T-cell (primary cell): ENCODE measurements at regions of chr2 and their contacts with region 1.

Region 1: GRCh38 chr2:84925724-84926376 is 20.4 kb downstream of the TMSB10 start:
- DNase-seq: peak; percentile 91 to 100 (median 96)
- ATAC-seq: peak; percentile 78 to 81 (median 79)
- H3K4me3 ChIP-seq: peak overlapping the region; percentile 61 to 77
- H3K4me3 Mint-ChIP-seq: peak overlapping the region; percentile 91 to 97 (median 92)
- H3K27ac ChIP-seq: peak overlapping the region; percentile 54
- H3K27ac Mint-ChIP-seq: peak overlapping the region; percentile 95 to 97
- H3K4me1 ChIP-seq: peaks cover 15 to 55% of the 10 kb centered on the region in 2 experiments
- H3K4me1 Mint-ChIP-seq: peaks cover 34 to 52% (median 40%) of the 10 kb centered on the region in 3 donors
- H3K27me3 ChIP-seq: no peaks in the 10 kb centered on the region
- H3K27me3 Mint-ChIP-seq: no peaks in the 10 kb centered on the region

Region 2: GRCh38 chr2:84492571-84492970 is 433.3 kb before region 1 on chr2:
- CTCF ChIA-PET with region 1: interaction called, 11 to 14 read pairs
- POLR2A ChIA-PET with region 1: no interaction called
- DNase-seq: no peak
- ATAC-seq: no peak
- H3K4me3 ChIP-seq: no peak overlapping the region
- H3K4me3 Mint-ChIP-seq: no peak overlapping the region
- H3K27ac ChIP-seq: no peak overlapping the region
- H3K27ac Mint-ChIP-seq: no peak overlapping the region
- H3K4me1 ChIP-seq: peaks cover 2 to 4% of the 10 kb centered on the region in 2 experiments
- H3K4me1 Mint-ChIP-seq: peaks cover 7 to 10% (median 7%) of the 10 kb centered on the region in 3 donors
- H3K27me3 ChIP-seq: no peaks in the 10 kb centered on the region
- H3K27me3 Mint-ChIP-seq: no peaks in the 10 kb centered on the region

Region 3: GRCh38 chr2:84881581-84882414 is 44.1 kb before region 1 on chr2:
- CTCF ChIA-PET with region 1: interaction called, 24 to 41 read pairs
- POLR2A ChIA-PET with region 1: interaction called in 1 of 2 experiments, 4 read pairs
- DNase-seq: peak; percentile 69 to 92 (median 84)
- ATAC-seq: peak; percentile 69 to 76 (median 70)
- H3K4me3 ChIP-seq: peak overlapping the region; percentile 71 to 99
- H3K4me3 Mint-ChIP-seq: peak overlapping the region; percentile 94 to 99 (median 97)
- H3K27ac ChIP-seq: peak overlapping the region; percentile 75
- H3K27ac Mint-ChIP-seq: peak overlapping the region; percentile 95 to 96
- H3K4me1 ChIP-seq: peaks cover 14 to 34% of the 10 kb centered on the region in 2 experiments
- H3K4me1 Mint-ChIP-seq: peaks cover 54 to 63% (median 57%) of the 10 kb centered on the region in 3 donors
- H3K27me3 ChIP-seq: peaks cover 0 to 5% of the 10 kb centered on the region in 2 experiments
- H3K27me3 Mint-ChIP-seq: no peaks in the 10 kb centered on the region

Region 4: GRCh38 chr2:84897773-84898172 is 28.1 kb before region 1 on chr2:
- CTCF ChIA-PET with region 1: interaction called, 4 to 12 read pairs
- POLR2A ChIA-PET with region 1: no interaction called
- DNase-seq: no peak
- ATAC-seq: no peak
- H3K4me3 ChIP-seq: no peak overlapping the region
- H3K4me3 Mint-ChIP-seq: no peak overlapping the region
- H3K27ac ChIP-seq: peak overlapping the region; percentile 75
- H3K27ac Mint-ChIP-seq: peak overlapping the region; percentile 97 to 99
- H3K4me1 ChIP-seq: peaks cover 30 to 44% of the 10 kb centered on the region in 2 experiments
- H3K4me1 Mint-ChIP-seq: peaks cover 53 to 77% (median 71%) of the 10 kb centered on the region in 3 donors
- H3K27me3 ChIP-seq: no peaks in the 10 kb centered on the region
- H3K27me3 Mint-ChIP-seq: no peaks in the 10 kb centered on the region

Region 5: GRCh38 chr2:84939426-84940087 is 13.7 kb after region 1 on chr2:
- CTCF ChIA-PET with region 1: interaction called, 7 to 32 read pairs
- POLR2A ChIA-PET with region 1: no interaction called
- DNase-seq: peak in 34 of 35 experiments; percentile 36 to 89 (median 69)
- ATAC-seq: peak; percentile 82 to 89 (median 88)
- H3K4me3 ChIP-seq: peak overlapping the region in 1 of 2 donors; percentile 20
- H3K4me3 Mint-ChIP-seq: peak overlapping the region; percentile 62 to 74 (median 69)
- H3K27ac ChIP-seq: peak overlapping the region; percentile 93
- H3K27ac Mint-ChIP-seq: peak overlapping the region; percentile 94 to 97
- H3K4me1 ChIP-seq: peaks cover 8 to 30% of the 10 kb centered on the region in 2 experiments
- H3K4me1 Mint-ChIP-seq: peaks cover 19 to 41% (median 28%) of the 10 kb centered on the region in 3 donors
- H3K27me3 ChIP-seq: no peaks in the 10 kb centered on the region
- H3K27me3 Mint-ChIP-seq: no peaks in the 10 kb centered on the region

Region 6: GRCh38 chr2:84970868-84971509 is 45.1 kb after region 1 on chr2 and contains the start of gene KCMF1:
- CTCF ChIA-PET with region 1: interaction called, 3 to 15 read pairs
- POLR2A ChIA-PET with region 1: no interaction called
- DNase-seq: peak in 34 of 35 experiments; percentile 20 to 75 (median 52)
- ATAC-seq: peak; percentile 63 to 67 (median 63)
- H3K4me3 ChIP-seq: peak within 1 kb of the TSS; percentile 95 to 99
- H3K4me3 Mint-ChIP-seq: peak within 1 kb of the TSS; percentile 98 to 99 (median 99)
- H3K27ac ChIP-seq: peak within 1 kb of the TSS; percentile 90
- H3K27ac Mint-ChIP-seq: peak within 1 kb of the TSS; percentile 98 to 99
- H3K4me1 ChIP-seq: peaks cover 26 to 34% of the 10 kb centered on the region in 2 experiments
- H3K4me1 Mint-ChIP-seq: peaks cover 59 to 65% (median 64%) of the 10 kb centered on the region in 3 donors
- H3K27me3 ChIP-seq: no peaks in the 10 kb centered on the region
- H3K27me3 Mint-ChIP-seq: no peaks in the 10 kb centered on the region
- total RNA-seq, gene KCMF1: 56.7 to 62.5 (median 60.3) TPM

Region 7: DNA sequence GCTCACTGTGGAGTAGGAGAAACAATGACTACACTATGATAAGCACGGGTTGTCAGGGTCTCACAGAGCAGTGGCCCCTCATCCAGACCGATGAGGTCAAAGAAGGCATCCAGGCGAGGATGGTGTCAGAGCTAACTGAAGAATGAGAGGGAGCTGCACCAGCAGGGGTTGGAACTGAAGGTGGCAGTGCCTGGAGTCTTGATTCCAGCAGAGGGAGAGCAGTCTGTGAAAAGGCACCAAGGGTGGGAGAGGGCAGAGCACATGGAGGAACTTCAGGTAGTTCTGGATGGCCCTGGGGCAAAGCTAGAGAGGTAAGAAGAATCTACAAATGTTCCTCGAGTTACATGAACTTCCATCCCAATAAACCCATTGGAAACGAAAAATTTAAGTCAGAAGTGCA is 441.3 kb after region 1 on chr2:
- CTCF ChIA-PET with region 1: no interaction called
- POLR2A ChIA-PET with region 1: no interaction called
- DNase-seq: no peak
- ATAC-seq: no peak
- H3K4me3 ChIP-seq: no peak overlapping the region
- H3K4me3 Mint-ChIP-seq: no peak overlapping the region
- H3K27ac ChIP-seq: no peak overlapping the region
- H3K27ac Mint-ChIP-seq: no peak overlapping the region
- H3K4me1 ChIP-seq: no peaks in the 10 kb centered on the region
- H3K4me1 Mint-ChIP-seq: no peaks in the 10 kb centered on the region
- H3K27me3 ChIP-seq: no peaks in the 10 kb centered on the region
- H3K27me3 Mint-ChIP-seq: no peaks in the 10 kb centered on the region